Heart right ventricle (tissue), 16 donors: ENCODE measurements at regions of chr15 and their contacts with region 1.

Region 1: DNA sequence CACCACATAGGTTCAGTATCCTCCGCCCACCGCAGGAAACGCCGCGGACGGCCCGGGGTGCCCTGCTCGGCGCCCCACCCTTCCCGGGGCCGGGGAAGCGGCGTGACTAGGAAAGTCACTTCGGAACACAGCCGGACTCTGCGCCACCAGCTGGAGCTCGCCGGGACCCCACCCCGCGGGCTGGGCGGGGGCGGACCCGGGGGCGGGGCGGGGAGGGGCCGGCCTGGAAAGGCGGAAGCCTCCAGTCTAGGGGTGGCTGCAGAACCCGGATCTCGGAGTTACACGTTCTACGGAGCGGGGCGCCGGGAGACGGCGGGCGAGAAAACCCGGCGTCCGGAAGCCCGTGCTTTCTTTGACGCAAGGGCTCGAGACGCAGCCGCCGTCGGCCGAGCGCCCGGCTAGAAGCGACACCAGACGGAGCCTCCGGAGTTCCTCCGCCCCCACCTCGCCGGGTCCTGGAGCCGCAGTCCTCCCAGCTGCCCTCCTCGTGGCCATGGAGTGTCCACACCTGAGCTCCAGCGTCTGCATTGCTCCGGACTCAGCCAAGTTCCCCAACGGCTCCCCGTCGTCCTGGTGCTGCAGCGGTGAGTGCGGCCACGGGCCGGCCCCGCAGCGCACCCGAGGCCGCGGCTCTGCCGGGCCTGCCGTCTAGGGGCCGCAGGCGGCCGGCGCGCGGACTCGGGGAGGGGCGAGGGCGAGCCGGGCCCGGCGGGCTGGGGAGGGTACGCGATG is at the start of gene USP3:
- DNase-seq: peak; percentile 94 to 96
- ATAC-seq: peak; percentile 91 to 97 (median 94)
- H3K4me3 ChIP-seq: peak within 1 kb of the TSS; percentile 64 to 89 (median 84)
- H3K27ac ChIP-seq: peak within 1 kb of the TSS; percentile 78 to 100 (median 98)
- H3K4me1 ChIP-seq: peaks cover 5 to 84% (median 65%) of the 10 kb centered on the region in 9 donors
- H3K27me3 ChIP-seq: no peaks in the 10 kb centered on the region
- CTCF ChIP-seq: peak; percentile 22 to 65 (median 47)
- total RNA-seq, gene USP3: 11.4 to 23.7 (median 17.6) TPM

Region 2: GRCh38 chr15:63381301-63382204 is 122.9 kb before region 1 on chr15 and contains the start of gene CA12:
- intact Hi-C with region 1: no loop called
- DNase-seq: peak; percentile 12 to 20
- ATAC-seq: peak; percentile 53 to 77 (median 68)
- H3K4me3 ChIP-seq: peak within 1 kb of the TSS; percentile 29 to 55 (median 45)
- H3K27ac ChIP-seq: peak within 1 kb of the TSS in 1 of 10 donors; percentile 17
- H3K4me1 ChIP-seq: peaks cover 4 to 21% (median 12%) of the 10 kb centered on the region in 9 donors
- H3K27me3 ChIP-seq: peaks cover 0 to 45% (median 35%) of the 10 kb centered on the region in 7 donors
- CTCF ChIP-seq: no peak
- total RNA-seq, gene CA12: 0.11 to 1.3 (median 0.15) TPM in 9 of 10 donors, not detected in the other

Region 3: GRCh38 chr15:63544258-63545026 is 40.0 kb after region 1 on chr15:
- intact Hi-C with region 1: loop called in 1 of 10 experiments (anchors 5 kb)
- DNase-seq: no peak
- ATAC-seq: no peak
- H3K4me3 ChIP-seq: peak overlapping the region in 3 of 10 donors; percentile 6
- H3K27ac ChIP-seq: peak overlapping the region in 3 of 10 donors; percentile 26 to 32 (median 26)
- H3K4me1 ChIP-seq: peaks cover 0 to 32% (median 8%) of the 10 kb centered on the region in 9 donors
- H3K27me3 ChIP-seq: no peaks in the 10 kb centered on the region
- CTCF ChIP-seq: no peak

Region 4: DNA sequence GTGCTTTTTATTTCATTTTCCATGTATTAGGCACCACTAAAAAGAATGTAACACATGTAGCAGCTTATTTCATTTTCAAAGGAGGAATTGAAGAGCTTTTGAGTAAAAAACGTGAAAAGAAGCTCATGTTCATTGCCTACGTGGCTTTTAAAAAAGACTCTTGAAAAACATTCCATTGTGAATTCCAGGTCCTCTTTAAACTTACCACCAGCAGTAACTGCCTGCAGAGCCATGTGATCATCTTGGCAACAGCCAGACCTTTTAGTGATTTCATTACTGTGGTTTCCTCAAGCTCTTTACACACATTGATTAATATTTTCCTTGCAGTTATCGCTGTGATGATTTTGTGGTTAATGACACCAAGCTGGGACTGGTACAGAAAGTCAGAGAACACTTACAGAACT is 49.0 kb after region 1 on chr15:
- intact Hi-C with region 1: loop called in 5 of 10 experiments (anchors 5 to 10 kb)
- DNase-seq: peak in 1 of 2 donors; percentile 38
- ATAC-seq: peak in 7 of 8 donors; percentile 81 to 87 (median 86)
- H3K4me3 ChIP-seq: peak overlapping the region in 5 of 10 donors; percentile 6 to 21 (median 15)
- H3K27ac ChIP-seq: peak overlapping the region in 5 of 10 donors; percentile 19 to 65 (median 37)
- H3K4me1 ChIP-seq: peaks cover 0 to 39% (median 23%) of the 10 kb centered on the region in 9 donors
- H3K27me3 ChIP-seq: no peaks in the 10 kb centered on the region
- CTCF ChIP-seq: no peak

Region 5: DNA sequence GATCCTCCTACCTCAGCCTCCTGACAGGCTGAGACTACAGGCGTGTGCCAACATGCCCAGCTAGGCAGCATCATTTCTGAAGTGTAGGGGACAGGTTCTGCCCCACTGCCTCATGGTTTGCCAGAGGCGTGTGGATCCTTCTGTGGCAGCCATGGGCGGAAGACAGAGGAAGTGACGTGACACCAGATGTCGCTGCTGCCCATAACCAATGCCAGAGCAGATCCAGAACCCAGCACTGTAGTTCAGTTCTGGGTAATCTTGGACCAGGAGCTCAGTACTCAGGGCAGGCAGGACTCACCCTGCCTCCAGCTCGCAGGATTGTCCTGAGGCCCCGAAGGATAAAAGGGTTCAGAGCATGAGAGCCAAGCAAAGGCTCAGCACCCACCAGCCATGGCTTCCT is 1262.8 kb after region 1 on chr15:
- intact Hi-C with region 1: no loop called
- DNase-seq: no peak
- ATAC-seq: no peak
- H3K4me3 ChIP-seq: no peak overlapping the region
- H3K27ac ChIP-seq: peak overlapping the region in 3 of 10 donors; percentile 6 to 46 (median 31)
- H3K4me1 ChIP-seq: peaks cover 0 to 69% (median 24%) of the 10 kb centered on the region in 9 donors
- H3K27me3 ChIP-seq: no peaks in the 10 kb centered on the region
- CTCF ChIP-seq: no peak